Activated CD4-positive, alpha-beta memory T cell treated with anti-CD3 and anti-CD28 coated beads, Interleukin-2, amount 10 ng/mL, durations not matched to agents 7 days and 5 days (primary cell): ENCODE measurements at regions of chr2 and their contacts with region 1.

Region 1: DNA sequence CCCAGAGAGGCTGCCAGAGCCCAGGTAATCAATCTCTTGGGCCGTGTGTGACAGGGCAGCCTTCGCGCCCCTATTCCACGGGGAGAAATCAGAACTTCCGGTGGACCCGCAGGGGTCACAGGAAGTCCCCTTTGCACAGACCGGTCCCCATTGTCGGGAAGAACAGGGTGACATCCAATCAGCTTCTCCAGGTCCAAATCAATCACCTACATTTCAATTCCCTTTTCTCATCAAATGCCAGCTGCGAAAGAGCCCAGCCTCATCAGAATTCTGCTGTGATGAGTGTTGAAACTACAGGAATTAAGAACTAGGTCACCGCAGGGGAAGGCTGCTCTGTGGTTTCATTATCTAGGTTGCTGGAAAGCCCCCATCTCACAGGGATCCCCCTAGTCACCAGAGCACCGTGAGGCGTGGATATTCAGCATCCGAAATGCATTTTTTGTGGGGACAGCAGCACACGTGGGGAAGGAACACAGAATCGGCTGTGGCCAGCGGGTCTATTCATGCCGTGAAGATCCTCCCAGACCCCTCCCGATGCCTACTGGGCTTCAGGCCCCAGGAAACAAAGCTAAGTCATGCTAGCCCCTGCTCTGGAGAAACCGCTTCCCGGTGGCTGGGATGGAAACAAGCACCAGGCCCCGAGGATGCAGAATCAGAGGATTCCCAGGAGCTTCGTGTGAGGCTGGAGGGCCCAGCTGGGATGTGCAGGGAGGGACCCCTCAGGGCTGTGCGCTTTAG is 193.7 kb upstream of the ID2 start:
- DNase-seq: peak; percentile 70
- H3K4me3 Mint-ChIP-seq: peak overlapping the region; percentile 81
- H3K27ac Mint-ChIP-seq: peak overlapping the region; percentile 84
- H3K4me1 Mint-ChIP-seq: peaks cover 78% of the 10 kb centered on the region
- H3K27me3 Mint-ChIP-seq: no peaks in the 10 kb centered on the region

Region 2: GRCh38 chr2:8252997-8253694 is 235.0 kb before region 1 on chr2:
- CTCF ChIA-PET with region 1: no interaction called
- POLR2A ChIA-PET with region 1: no interaction called
- DNase-seq: no peak
- H3K4me3 Mint-ChIP-seq: no peak overlapping the region
- H3K27ac Mint-ChIP-seq: no peak overlapping the region
- H3K4me1 Mint-ChIP-seq: peaks cover 2% of the 10 kb centered on the region
- H3K27me3 Mint-ChIP-seq: no peaks in the 10 kb centered on the region

Region 3: GRCh38 chr2:8465560-8465959 is 22.6 kb before region 1 on chr2:
- CTCF ChIA-PET with region 1: no interaction called
- POLR2A ChIA-PET with region 1: no interaction called
- DNase-seq: no peak
- H3K4me3 Mint-ChIP-seq: no peak overlapping the region
- H3K27ac Mint-ChIP-seq: no peak overlapping the region
- H3K4me1 Mint-ChIP-seq: peaks cover 31% of the 10 kb centered on the region
- H3K27me3 Mint-ChIP-seq: no peaks in the 10 kb centered on the region

Region 4: GRCh38 chr2:8477552-8478470 is 10.4 kb before region 1 on chr2:
- CTCF ChIA-PET with region 1: interaction called, 4 read pairs
- POLR2A ChIA-PET with region 1: interaction called, 40 read pairs
- DNase-seq: peak; percentile 56
- H3K4me3 Mint-ChIP-seq: peak overlapping the region; percentile 58
- H3K27ac Mint-ChIP-seq: peak overlapping the region; percentile 96
- H3K4me1 Mint-ChIP-seq: peaks cover 93% of the 10 kb centered on the region
- H3K27me3 Mint-ChIP-seq: no peaks in the 10 kb centered on the region

Region 5: DNA sequence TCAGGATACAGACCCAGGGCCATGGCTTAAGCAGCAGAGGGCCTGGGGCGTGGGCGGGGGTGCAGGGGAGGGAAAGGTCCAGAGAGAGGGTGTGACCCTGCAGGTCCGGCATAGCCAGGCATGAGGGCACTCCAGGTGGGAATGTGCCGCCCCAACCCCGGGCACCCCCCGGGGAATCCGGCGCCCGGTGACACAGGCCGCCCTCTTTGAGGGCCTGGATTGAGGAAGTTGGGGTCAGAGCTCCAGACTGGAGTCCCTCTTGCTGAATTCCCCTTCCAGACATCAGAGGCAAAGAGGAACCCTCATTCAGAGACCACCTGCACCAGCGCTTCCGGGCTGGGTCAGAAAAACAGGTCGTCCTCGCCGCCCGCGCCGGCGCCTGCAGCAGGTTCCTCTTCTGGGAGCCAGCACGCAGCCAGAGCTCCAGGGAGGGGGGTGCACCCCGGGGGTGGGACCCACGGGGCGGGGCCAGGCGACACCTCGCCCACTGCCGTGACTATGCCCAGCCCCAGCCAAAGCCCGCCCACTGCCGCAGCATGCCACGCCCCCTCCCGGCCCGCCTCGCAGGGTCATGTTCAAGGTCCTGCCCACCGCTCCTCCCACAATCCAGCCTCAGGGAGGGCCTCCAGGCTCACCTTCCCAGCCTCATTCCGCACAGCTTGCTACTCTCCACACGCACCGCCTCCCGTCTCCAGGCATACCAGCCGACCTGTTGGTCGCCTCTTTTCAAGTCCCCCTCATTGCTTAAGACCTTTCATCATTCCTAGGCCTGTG is 95.4 kb after region 1 on chr2:
- CTCF ChIA-PET with region 1: no interaction called
- POLR2A ChIA-PET with region 1: no interaction called
- DNase-seq: peak; percentile 37
- H3K4me3 Mint-ChIP-seq: no peak overlapping the region
- H3K27ac Mint-ChIP-seq: no peak overlapping the region
- H3K4me1 Mint-ChIP-seq: peaks cover 41% of the 10 kb centered on the region
- H3K27me3 Mint-ChIP-seq: peaks cover 14% of the 10 kb centered on the region

Region 6: GRCh38 chr2:8774371-8774770 is 286.2 kb after region 1 on chr2:
- CTCF ChIA-PET with region 1: no interaction called
- POLR2A ChIA-PET with region 1: no interaction called
- DNase-seq: no peak
- H3K4me3 Mint-ChIP-seq: no peak overlapping the region
- H3K27ac Mint-ChIP-seq: no peak overlapping the region
- H3K4me1 Mint-ChIP-seq: no peaks in the 10 kb centered on the region
- H3K27me3 Mint-ChIP-seq: no peaks in the 10 kb centered on the region